ENCODE measurements at regions of chr12 and their contacts with region 1.

Region 1: GRCh38 chr12:53190108-53190729 is 9.5 kb upstream of the CSAD start:
- DNase-seq: peak in 2 of 3 donors; percentile 54 to 65
- H3K4me3 ChIP-seq: no peak overlapping the region
- H3K27ac ChIP-seq: no peak overlapping the region
- H3K4me1 ChIP-seq: peaks cover 0 to 2% (median 0%) of the 10 kb centered on the region in 4 experiments
- H3K27me3 ChIP-seq: no peaks in the 10 kb centered on the region

Region 2: DNA sequence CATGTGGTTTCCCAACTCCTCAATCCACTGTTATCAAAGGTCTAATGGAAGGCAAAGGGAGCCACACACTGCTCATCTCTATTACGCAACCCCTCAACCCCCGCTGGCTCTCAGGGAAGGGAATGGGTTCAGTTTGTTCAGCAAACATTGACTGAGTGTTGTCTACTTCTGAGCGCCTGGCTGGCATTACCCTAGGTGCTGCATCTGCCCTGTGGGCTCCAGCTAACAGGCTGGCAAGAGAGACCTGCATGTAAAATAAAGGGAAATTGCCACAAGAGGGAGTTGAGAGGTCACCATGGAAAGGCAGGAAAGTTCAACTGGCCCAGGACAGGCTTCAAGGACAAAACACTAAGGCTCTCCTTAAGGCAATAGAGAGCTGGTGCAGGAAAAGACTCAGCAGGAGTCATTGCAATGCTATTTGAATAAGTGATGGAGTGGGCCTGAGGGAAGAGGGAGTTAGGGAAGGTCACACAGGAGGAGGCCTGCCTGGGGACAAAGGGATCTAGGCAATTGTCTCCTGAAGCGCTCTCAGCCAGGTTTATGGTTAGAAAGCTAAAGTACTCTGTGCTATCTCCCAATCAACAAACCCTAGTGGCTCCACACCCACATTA is 15.2 kb before region 1 on chr12:
- CTCF ChIA-PET with region 1: interaction called, 63 read pairs
- POLR2A ChIA-PET with region 1: no interaction called
- DNase-seq: peak in 2 of 3 donors; percentile 32 to 43
- H3K4me3 ChIP-seq: no peak overlapping the region
- H3K27ac ChIP-seq: no peak overlapping the region
- H3K4me1 ChIP-seq: peaks cover 3 to 12% (median 8%) of the 10 kb centered on the region in 4 experiments
- H3K27me3 ChIP-seq: no peaks in the 10 kb centered on the region

Region 3: DNA sequence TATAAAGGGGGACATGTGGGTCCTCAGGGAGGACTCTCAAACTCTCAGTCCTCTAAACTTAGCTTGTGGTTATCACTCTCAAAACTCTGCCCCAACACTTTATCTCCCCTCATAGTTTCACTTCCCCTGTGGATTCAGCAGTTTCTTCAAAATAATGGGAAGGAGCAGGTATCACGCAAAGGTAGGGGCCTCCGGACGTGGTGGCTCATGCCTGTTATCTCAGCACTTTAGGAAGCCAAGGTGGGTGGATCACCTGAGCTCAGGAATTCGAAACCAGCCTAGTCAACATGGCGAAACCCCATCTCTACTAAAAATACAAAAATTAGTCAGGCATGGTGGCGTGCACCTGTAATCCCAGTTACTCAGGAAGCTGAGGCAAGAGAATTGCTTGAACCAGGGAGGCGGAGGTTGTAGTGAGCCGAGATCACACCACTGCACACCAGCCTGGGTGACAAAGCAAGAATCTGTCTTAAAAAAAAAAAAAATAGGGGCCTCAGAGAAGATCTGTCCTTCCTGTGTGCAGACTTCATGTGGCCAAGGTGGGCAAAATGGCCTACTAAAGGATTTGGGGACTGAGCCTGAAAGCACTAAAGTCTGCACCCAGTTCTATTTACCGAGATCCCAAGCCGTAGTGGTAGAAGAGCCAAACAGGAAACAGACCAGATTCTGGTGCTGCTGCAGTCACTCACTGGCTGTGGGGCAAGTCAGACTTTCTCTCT is 10.4 kb after region 1 on chr12:
- CTCF ChIA-PET with region 1: interaction called, 69 read pairs
- POLR2A ChIA-PET with region 1: no interaction called
- DNase-seq: peak in 2 of 3 donors; percentile 40 to 57
- H3K4me3 ChIP-seq: no peak overlapping the region
- H3K27ac ChIP-seq: peak overlapping the region in 1 of 2 experiments; percentile 49
- H3K4me1 ChIP-seq: peaks cover 9 to 47% (median 39%) of the 10 kb centered on the region in 4 experiments
- H3K27me3 ChIP-seq: no peaks in the 10 kb centered on the region

Region 4: GRCh38 chr12:53213348-53213747 is 23.1 kb after region 1 on chr12:
- CTCF ChIA-PET with region 1: interaction called, 160 read pairs
- POLR2A ChIA-PET with region 1: no interaction called
- DNase-seq: peak; percentile 78 to 86 (median 82)
- H3K4me3 ChIP-seq: no peak overlapping the region
- H3K27ac ChIP-seq: no peak overlapping the region
- H3K4me1 ChIP-seq: peaks cover 2 to 65% (median 55%) of the 10 kb centered on the region in 4 experiments
- H3K27me3 ChIP-seq: no peaks in the 10 kb centered on the region

Measured in common myeloid progenitor, CD34-positive (primary cell).